ENCODE measurements at regions of chr9 and their contacts with region 1.

Region 1: GRCh38 chr9:114653556-114654159 is 3.9 kb downstream of the TEX53 start:
- DNase-seq: peak; percentile 79 to 91 (median 83)
- H3K4me3 ChIP-seq: no peak overlapping the region
- H3K27ac ChIP-seq: peak overlapping the region in 3 of 5 donors; percentile 66 to 78 (median 74)
- H3K4me1 ChIP-seq: peaks cover 0 to 11% of the 10 kb centered on the region in 2 donors
- H3K27me3 ChIP-seq: no peaks in the 10 kb centered on the region
- CTCF ChIP-seq: peak; percentile 76 to 95 (median 93)
- POLR2A ChIP-seq: no peak

Region 2: GRCh38 chr9:114343476-114344187 is 310.0 kb before region 1 on chr9:
- intact Hi-C with region 1: loop called (anchors 5 to 10 kb)
- DNase-seq: no peak
- H3K4me3 ChIP-seq: no peak overlapping the region
- H3K27ac ChIP-seq: no peak overlapping the region
- H3K4me1 ChIP-seq: peaks cover under 1 to 3% of the 10 kb centered on the region in 2 donors
- H3K27me3 ChIP-seq: no peaks in the 10 kb centered on the region
- CTCF ChIP-seq: no peak
- POLR2A ChIP-seq: no peak

Region 3: GRCh38 chr9:114405294-114406034 is 248.2 kb before region 1 on chr9:
- intact Hi-C with region 1: loop called (anchors 5 to 10 kb)
- DNase-seq: peak; percentile 74 to 90 (median 76)
- H3K4me3 ChIP-seq: no peak overlapping the region
- H3K27ac ChIP-seq: no peak overlapping the region
- H3K4me1 ChIP-seq: no peaks in the 10 kb centered on the region
- H3K27me3 ChIP-seq: no peaks in the 10 kb centered on the region
- CTCF ChIP-seq: peak; percentile 38 to 86 (median 70)
- POLR2A ChIP-seq: no peak

Region 4: DNA sequence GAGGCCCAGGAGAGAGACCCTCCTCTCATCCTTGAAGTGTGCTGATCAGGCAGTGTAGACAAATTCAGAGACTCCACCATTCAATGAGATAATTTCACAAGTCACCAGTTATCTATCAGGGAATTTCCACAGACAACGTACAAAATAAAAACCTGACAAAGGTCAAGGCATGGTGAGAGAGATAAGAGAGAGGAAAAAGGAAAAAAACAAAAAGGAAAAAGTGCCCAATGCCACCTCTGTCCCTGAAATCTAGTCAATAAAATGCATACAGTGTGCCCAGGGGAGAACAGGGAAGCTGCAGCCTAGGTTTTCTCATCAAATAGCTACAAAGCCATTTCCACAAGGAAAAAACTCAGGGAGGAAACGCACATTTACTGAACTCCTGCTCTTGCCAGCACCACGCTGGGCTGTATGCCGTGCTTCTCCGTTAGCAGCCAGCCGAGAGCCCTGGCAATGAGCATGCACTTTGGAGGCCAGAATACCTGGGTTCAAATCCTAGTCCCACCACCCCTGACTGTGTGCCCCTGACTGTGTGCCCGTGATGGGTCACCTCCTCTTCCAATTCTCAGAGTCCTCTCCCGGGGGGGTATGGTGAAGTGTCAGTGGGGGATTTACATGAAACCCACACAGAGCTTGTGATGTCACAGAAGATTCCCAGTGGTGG is 160.0 kb before region 1 on chr9:
- intact Hi-C with region 1: loop called in 1 of 2 experiments (anchors 5 kb)
- DNase-seq: peak in 2 of 7 donors; percentile 41 to 42
- H3K4me3 ChIP-seq: no peak overlapping the region
- H3K27ac ChIP-seq: peak overlapping the region; percentile 23 to 89 (median 79)
- H3K4me1 ChIP-seq: peaks cover 0 to 69% of the 10 kb centered on the region in 2 donors
- H3K27me3 ChIP-seq: no peaks in the 10 kb centered on the region
- CTCF ChIP-seq: no peak
- POLR2A ChIP-seq: peak in 1 of 2 donors; percentile 46

Region 5: DNA sequence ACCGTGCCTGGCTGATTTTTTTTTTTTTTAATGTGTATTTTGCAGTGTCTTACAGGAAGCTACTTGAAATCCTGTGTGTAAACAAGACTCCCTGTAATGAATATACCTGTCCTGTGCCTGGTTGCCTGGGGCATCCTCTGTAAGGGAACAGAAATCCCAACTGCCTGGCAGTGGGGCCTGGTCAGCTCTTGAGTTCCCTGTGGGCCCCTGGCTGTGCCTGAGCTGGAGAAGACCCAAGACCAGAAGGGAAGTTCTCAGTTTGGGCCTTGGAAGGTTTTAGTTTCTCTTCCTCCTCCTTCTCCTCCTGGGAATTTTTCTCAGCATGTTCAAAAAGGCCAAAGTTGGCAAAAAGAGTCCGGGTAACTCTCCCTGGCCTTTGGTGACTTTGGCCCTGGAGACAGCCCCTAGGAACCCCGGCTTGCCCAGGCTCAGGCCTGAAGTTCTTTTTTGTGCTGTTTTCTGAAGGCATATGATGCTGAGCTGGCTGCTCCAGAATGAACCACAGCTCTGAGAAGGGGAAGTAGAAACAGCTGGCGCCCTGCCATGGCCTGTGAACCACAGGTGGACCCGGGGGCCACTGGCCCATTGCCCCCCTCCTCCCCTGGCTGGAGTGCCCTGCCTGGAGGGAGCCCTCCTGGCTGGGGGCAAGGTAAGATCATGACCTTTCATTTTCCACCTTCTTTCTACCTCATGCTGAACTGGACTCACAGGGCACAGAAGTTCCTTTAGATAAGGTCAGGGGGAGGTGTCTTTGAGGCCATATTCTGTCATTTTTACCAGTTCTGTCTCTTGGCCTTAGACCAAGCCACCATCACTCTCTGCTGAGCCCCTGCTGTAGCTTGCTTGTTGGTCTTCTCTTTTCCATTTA is 36.8 kb before region 1 on chr9:
- intact Hi-C with region 1: loop called in 1 of 2 experiments (anchors 5 kb)
- DNase-seq: peak; percentile 38 to 79 (median 62)
- H3K4me3 ChIP-seq: no peak overlapping the region
- H3K27ac ChIP-seq: peak overlapping the region in 2 of 5 donors; percentile 6 to 56
- H3K4me1 ChIP-seq: peaks cover 11 to 35% of the 10 kb centered on the region in 2 donors
- H3K27me3 ChIP-seq: no peaks in the 10 kb centered on the region
- CTCF ChIP-seq: no peak
- POLR2A ChIP-seq: no peak